ENCODE measurements at regions of chr2 and their contacts with region 1.

Region 1: GRCh38 chr2:99066075-99066958 is 75.2 kb upstream of the C2orf15 start:
- DNase-seq: no peak
- H3K4me3 ChIP-seq: no peak overlapping the region
- H3K27me3 ChIP-seq: no peaks in the 10 kb centered on the region
- CTCF ChIP-seq: peak; percentile 61

Region 2: GRCh38 chr2:98835831-98836385 is 230.4 kb before region 1 on chr2:
- CTCF ChIA-PET with region 1: interaction called, 10 read pairs
- POLR2A ChIA-PET with region 1: no interaction called
- DNase-seq: no peak
- H3K4me3 ChIP-seq: no peak overlapping the region
- H3K27me3 ChIP-seq: peaks cover 1% of the 10 kb centered on the region; the same call in 1 of the 2 replicates
- CTCF ChIP-seq: no peak

Region 3: DNA sequence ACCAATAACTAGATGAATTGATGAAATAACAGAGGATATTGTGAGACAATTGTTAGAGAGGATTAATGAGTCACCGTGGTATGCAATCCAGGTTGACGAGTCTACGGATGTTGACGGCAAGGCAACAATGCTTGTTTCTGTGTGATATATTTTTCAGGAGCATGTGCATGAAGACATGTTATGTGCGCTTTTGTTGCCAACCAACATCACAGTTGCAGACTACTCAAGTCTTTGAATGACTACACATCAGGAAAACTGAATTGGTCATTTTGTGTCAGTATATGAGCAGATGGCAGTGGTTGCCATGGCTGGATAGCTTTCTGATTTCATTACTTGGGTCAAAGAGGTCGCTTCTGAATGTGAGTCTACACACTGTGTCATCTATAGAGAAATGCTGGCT is 33.5 kb before region 1 on chr2:
- CTCF ChIA-PET with region 1: no interaction called
- POLR2A ChIA-PET with region 1: no interaction called
- DNase-seq: no peak
- H3K4me3 ChIP-seq: no peak overlapping the region
- H3K27me3 ChIP-seq: no peaks in the 10 kb centered on the region
- CTCF ChIP-seq: no peak